T-cell (primary cell): ENCODE measurements at regions of chr16 and their contacts with region 1.

Region 1: GRCh38 chr16:46830902-46831647 is at the start of gene C16orf87:
- DNase-seq: peak; percentile 80 to 95 (median 90)
- ATAC-seq: peak; percentile 92 to 94 (median 94)
- H3K4me3 ChIP-seq: peak within 1 kb of the TSS; percentile 55 to 84
- H3K4me3 Mint-ChIP-seq: peak within 1 kb of the TSS; percentile 91 to 96 (median 96)
- H3K27ac ChIP-seq: peak within 1 kb of the TSS; percentile 43
- H3K27ac Mint-ChIP-seq: peak within 1 kb of the TSS; percentile 88 to 91
- H3K4me1 ChIP-seq: peaks cover 7 to 9% of the 10 kb centered on the region in 2 experiments
- H3K4me1 Mint-ChIP-seq: peaks cover 34 to 37% (median 35%) of the 10 kb centered on the region in 3 donors
- H3K27me3 ChIP-seq: no peaks in the 10 kb centered on the region
- H3K27me3 Mint-ChIP-seq: no peaks in the 10 kb centered on the region
- total RNA-seq, gene C16orf87: 5.2 to 15.6 (median 7.2) TPM

Region 2: GRCh38 chr16:46774743-46775177 is 56.3 kb before region 1 on chr16:
- CTCF ChIA-PET with region 1: interaction called, 3 to 5 read pairs
- POLR2A ChIA-PET with region 1: interaction called in 1 of 2 experiments, 13 read pairs
- DNase-seq: no peak
- ATAC-seq: no peak
- H3K4me3 ChIP-seq: no peak overlapping the region
- H3K4me3 Mint-ChIP-seq: no peak overlapping the region
- H3K27ac ChIP-seq: no peak overlapping the region
- H3K27ac Mint-ChIP-seq: no peak overlapping the region
- H3K4me1 ChIP-seq: no peaks in the 10 kb centered on the region
- H3K4me1 Mint-ChIP-seq: no peaks in the 10 kb centered on the region
- H3K27me3 ChIP-seq: peaks cover 0 to 9% of the 10 kb centered on the region in 2 experiments
- H3K27me3 Mint-ChIP-seq: no peaks in the 10 kb centered on the region

Region 3: GRCh38 chr16:46814790-46815189 is 16.3 kb before region 1 on chr16:
- CTCF ChIA-PET with region 1: interaction called, 5 to 10 read pairs
- POLR2A ChIA-PET with region 1: interaction called in 1 of 2 experiments, 12 read pairs
- DNase-seq: no peak
- ATAC-seq: no peak
- H3K4me3 ChIP-seq: no peak overlapping the region
- H3K4me3 Mint-ChIP-seq: peak overlapping the region in 1 of 3 donors; percentile 10
- H3K27ac ChIP-seq: no peak overlapping the region
- H3K27ac Mint-ChIP-seq: no peak overlapping the region
- H3K4me1 ChIP-seq: peaks cover 0 to 3% of the 10 kb centered on the region in 2 experiments
- H3K4me1 Mint-ChIP-seq: peaks cover 39 to 53% (median 49%) of the 10 kb centered on the region in 3 donors
- H3K27me3 ChIP-seq: no peaks in the 10 kb centered on the region
- H3K27me3 Mint-ChIP-seq: no peaks in the 10 kb centered on the region

Region 4: DNA sequence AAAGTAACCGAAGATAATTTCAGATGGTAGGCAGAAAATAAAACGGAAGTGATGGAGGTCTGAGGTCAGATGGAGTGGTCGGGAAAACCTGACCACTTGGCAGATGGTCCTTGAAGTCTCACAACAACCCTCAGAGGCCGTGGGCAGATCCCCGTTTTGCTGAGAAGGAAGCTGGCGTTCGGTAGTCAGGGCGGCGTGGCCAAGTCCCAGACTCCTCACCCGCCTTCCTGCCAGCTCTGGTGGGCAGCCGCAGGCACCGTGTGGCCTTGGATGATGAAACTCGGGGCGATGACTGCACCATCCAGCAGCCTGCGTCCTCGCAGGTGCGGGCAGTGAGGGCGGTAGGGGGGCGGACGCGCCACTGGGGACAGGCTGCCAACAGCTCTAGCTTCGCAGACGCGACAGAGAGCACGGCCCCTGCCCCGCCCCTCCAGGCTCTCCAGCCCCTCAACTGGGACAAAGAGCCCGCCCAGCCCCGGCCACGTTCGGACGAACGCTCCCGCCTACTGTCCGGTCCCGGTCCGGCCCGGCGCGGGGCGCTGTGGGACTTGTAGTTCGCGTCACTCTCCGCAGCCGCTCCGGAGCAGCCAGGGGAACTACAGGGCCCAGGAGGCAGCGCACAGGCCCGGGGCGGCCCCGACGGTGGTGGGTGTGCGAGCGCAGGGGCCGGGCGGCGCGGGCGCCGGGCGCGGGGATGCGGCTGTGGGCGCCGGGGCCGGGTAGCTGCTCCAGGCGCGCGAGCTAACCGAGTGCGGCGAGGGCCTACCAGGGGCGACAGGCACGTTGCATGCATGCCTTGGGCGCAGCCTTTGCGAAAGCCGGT is 52.8 kb after region 1 on chr16 and contains the start of gene GPT2:
- CTCF ChIA-PET with region 1: no interaction called
- POLR2A ChIA-PET with region 1: interaction called, 5 to 16 read pairs
- DNase-seq: peak; percentile 4 to 73 (median 45)
- ATAC-seq: peak; percentile 96 to 97 (median 96)
- H3K4me3 ChIP-seq: peak within 1 kb of the TSS; percentile 62 to 67
- H3K4me3 Mint-ChIP-seq: peak within 1 kb of the TSS; percentile 79 to 84 (median 84)
- H3K27ac ChIP-seq: no peak within 1 kb of the TSS
- H3K27ac Mint-ChIP-seq: peak within 1 kb of the TSS in 1 of 2 donors; percentile 22
- H3K4me1 ChIP-seq: peaks cover 0 to 17% of the 10 kb centered on the region in 2 experiments
- H3K4me1 Mint-ChIP-seq: peaks cover 5 to 13% (median 11%) of the 10 kb centered on the region in 3 donors
- H3K27me3 ChIP-seq: peaks cover 3 to 35% of the 10 kb centered on the region in 2 experiments
- H3K27me3 Mint-ChIP-seq: peaks cover 7 to 11% of the 10 kb centered on the region in 2 donors
- total RNA-seq, gene GPT2: 0.40 to 4.7 (median 2.1) TPM

Region 5: GRCh38 chr16:46899443-46900143 is 68.5 kb after region 1 on chr16:
- CTCF ChIA-PET with region 1: no interaction called
- POLR2A ChIA-PET with region 1: no interaction called
- DNase-seq: no peak
- ATAC-seq: no peak
- H3K4me3 ChIP-seq: no peak overlapping the region
- H3K4me3 Mint-ChIP-seq: no peak overlapping the region
- H3K27ac ChIP-seq: no peak overlapping the region
- H3K27ac Mint-ChIP-seq: no peak overlapping the region
- H3K4me1 ChIP-seq: no peaks in the 10 kb centered on the region
- H3K4me1 Mint-ChIP-seq: no peaks in the 10 kb centered on the region
- H3K27me3 ChIP-seq: peaks cover 0 to 14% of the 10 kb centered on the region in 2 experiments
- H3K27me3 Mint-ChIP-seq: no peaks in the 10 kb centered on the region

Region 6: GRCh38 chr16:48596326-48596725 is 1765.3 kb after region 1 on chr16:
- CTCF ChIA-PET with region 1: no interaction called
- POLR2A ChIA-PET with region 1: interaction called in 1 of 2 experiments, 11 read pairs
- DNase-seq: peak in 2 of 35 experiments; percentile 8 to 49
- ATAC-seq: peak in 2 of 4 experiments; percentile 48 to 56
- H3K4me3 ChIP-seq: no peak overlapping the region
- H3K4me3 Mint-ChIP-seq: peak overlapping the region in 1 of 3 donors; percentile 8
- H3K27ac ChIP-seq: no peak overlapping the region
- H3K27ac Mint-ChIP-seq: peak overlapping the region; percentile 69 to 75
- H3K4me1 ChIP-seq: peaks cover 15 to 19% of the 10 kb centered on the region in 2 experiments
- H3K4me1 Mint-ChIP-seq: peaks cover 60 to 67% (median 65%) of the 10 kb centered on the region in 3 donors
- H3K27me3 ChIP-seq: no peaks in the 10 kb centered on the region
- H3K27me3 Mint-ChIP-seq: no peaks in the 10 kb centered on the region